Right ventricle myocardium inferior (tissue), 1 donor: ENCODE measurements at regions of chr9 and their contacts with region 1.

Region 1: DNA sequence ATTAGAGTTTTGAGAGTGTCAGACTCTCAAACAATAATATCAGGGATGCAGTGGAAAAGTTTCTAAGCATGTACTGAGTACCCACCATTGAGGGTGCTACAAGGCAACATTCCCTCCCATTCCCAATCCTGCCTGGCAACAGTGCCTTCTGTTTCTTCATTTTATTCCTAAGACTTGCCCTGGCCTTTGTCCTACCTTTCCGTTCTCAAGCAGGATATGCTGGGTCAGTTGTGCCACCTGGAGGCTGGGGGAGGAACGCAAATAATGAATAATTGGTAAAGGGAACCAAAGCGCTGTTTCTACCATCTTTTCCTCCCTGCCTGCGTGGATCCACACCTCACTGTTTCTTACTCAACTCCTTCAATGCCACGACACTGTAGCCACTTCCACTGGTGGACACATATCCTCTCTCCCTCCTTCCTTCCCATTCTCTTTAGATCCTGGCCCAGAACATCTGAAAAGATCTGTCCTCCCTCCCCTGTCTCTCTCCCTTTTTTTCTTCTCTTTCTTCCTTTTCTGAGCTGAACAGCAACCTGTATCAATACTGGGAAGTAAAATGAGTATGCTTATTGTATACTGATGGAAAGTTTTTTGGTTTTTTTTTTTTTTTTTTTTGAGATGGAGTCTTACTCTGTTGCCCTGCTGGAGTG is 149.5 kb downstream of the C9orf152 start:
- DNase-seq: no peak
- ATAC-seq: peak; percentile 62

Region 2: DNA sequence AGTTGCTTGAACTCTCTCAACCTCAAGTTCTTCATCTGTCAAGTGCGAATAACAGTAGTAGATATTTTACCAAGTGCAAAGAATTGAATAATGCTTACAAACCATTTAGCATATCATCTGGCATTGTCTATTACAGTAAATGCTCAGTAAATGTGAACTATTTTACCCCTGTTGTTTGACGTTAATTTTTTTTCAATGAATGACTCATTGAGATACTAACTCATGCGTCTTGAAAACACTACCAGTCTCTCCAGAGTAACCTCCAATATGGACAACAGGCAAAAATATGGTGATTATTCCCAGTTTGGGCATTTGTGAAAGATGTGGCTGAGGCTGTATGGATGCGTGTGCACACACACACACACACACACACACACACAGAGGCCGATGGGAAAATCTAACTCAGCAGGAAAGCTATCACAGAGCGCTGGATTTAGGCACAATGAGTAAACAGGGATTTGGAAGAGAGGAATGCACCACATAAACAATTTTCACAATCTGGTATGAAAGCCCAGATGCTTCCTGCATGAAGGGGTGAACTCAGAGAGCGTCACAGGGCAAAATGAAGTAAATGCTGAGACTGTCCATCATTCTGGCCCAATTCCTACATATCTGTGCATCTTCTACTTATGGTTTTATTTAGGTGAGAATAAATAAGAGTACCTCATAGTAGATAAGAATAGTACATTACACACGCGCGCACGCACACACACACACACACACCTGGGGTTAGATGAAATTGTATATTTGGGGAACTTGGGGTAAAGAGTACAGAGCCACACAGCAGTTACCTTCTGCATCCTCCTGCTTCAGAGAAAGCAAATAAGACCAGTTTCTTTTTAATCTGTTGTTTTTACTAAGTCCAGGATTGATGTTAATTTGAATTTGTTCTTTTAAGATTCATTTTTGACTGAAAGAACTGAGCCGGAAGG is 149.7 kb before region 1 on chr9:
- intact Hi-C with region 1: loop called (anchors 2 kb)
- DNase-seq: no peak
- ATAC-seq: no peak

Region 3: DNA sequence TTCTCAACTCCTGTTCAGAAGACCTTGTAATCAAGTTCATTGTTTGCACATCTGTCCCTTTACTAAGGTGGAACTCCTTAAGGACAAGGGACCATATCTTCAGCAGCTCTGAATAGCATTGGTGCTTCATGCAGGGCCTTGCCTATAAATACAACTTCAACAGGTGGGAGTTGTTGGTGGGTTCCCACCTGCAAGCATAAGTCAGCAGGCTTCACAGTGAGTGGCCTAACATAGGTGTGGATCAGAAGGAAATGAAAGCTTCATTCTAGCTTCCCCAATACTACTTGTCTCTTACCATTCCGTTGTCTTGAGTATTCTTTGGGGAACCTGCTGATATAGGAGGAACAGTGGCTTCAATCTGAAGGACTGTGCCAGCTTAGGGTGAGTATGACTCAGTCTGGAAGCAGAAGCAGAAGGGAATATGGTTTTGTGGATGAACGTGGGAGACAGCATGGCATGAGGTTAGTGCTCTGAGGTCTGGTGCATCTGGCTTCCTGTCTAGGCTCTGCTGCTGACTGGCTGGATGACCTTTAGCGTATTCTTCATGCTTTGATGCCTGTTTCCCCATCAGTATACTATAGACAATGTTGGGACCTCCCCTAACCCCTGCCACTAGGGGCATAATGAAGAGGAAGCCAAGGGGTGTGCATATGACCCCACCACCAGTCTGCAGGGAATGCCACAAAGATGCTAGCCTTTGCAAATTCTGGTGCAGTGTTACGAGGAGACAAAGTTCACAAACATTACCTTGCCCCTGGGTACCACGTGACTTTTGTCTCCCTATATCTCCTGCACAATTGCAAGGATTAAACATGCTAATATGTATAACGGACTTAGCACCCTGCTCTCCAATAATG is 86.2 kb before region 1 on chr9:
- intact Hi-C with region 1: loop called (anchors 5 kb)
- DNase-seq: no peak
- ATAC-seq: peak; percentile 48

Region 4: DNA sequence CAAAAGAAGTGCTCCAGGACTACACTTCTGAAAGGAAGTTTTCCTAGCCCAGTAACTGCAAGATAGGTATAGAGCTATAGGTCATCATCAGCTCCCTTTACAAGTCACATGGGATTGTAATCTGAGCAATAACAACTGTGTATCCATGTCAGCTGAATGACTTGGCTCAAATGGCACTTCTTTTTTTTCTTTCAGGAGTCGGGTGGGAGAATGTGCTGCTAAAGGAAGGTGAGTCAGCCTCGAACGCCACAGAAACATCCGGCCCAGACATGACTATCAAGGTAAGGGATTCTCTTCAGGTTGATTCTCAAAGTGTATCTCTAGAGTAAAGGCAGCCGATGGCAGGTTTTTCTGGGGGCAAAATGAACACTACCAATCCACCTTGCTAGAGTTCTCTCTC is 42.7 kb before region 1 on chr9:
- intact Hi-C with region 1: no loop called
- DNase-seq: no peak
- ATAC-seq: no peak